Calu3 (cell line): ENCODE measurements at regions of chr13 and their contacts with region 1.

Region 1: GRCh38 chr13:110108347-110109174 is 198.4 kb downstream of the COL4A1 start:
- DNase-seq: peak; percentile 60
- H3K4me3 Mint-ChIP-seq: no peak overlapping the region
- H3K27ac Mint-ChIP-seq: no peak overlapping the region
- H3K4me1 Mint-ChIP-seq: peaks cover 11% of the 10 kb centered on the region
- H3K27me3 Mint-ChIP-seq: no peaks in the 10 kb centered on the region
- CTCF ChIP-seq: no peak

Region 2: DNA sequence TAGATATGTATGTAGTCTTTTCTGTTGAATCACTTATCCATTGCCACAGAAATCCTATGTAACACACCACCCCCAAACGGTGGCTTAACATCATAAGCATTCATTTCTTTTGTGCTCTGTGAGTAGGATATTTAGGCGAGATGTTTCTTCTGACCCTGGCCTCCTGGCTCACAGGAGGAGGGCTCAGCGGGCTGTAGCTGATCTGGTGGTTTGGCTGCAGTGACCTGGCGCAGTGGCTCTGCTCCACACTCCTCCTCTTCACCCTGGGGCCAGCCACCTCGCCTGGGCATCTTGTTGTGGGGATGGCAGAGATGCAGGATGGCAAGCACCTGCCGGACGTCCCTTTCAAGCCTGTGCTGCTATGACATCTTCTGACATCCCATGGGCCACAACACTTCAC is 175.1 kb before region 1 on chr13:
- CTCF ChIA-PET with region 1: no interaction called
- intact Hi-C with region 1: loop called (anchors 5 kb)
- DNase-seq: no peak
- H3K4me3 Mint-ChIP-seq: no peak overlapping the region
- H3K27ac Mint-ChIP-seq: no peak overlapping the region
- H3K4me1 Mint-ChIP-seq: no peaks in the 10 kb centered on the region
- H3K27me3 Mint-ChIP-seq: no peaks in the 10 kb centered on the region
- CTCF ChIP-seq: no peak

Region 3: DNA sequence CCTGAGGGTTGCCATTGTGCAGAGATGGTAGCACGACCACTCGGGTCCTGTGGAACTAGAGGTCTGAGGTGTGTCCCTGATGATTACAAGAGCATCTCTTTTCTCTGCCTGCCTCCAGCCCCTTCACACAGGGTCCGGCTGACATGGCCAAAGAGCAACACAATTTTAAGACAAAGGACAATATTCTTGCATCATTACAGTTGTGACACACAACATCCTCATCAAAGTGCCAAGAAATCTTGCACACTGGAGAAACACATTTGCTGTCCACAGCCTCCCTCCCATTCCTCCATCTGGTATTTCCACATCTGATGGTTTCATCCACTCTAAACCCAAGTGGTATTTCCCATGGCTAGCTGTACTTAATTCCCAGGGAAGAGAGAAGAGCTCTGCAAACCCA is 185.6 kb after region 1 on chr13:
- CTCF ChIA-PET with region 1: no interaction called
- intact Hi-C with region 1: no loop called
- DNase-seq: no peak
- H3K4me3 Mint-ChIP-seq: no peak overlapping the region
- H3K27ac Mint-ChIP-seq: no peak overlapping the region
- H3K4me1 Mint-ChIP-seq: no peaks in the 10 kb centered on the region
- H3K27me3 Mint-ChIP-seq: no peaks in the 10 kb centered on the region
- CTCF ChIP-seq: no peak

Region 4: DNA sequence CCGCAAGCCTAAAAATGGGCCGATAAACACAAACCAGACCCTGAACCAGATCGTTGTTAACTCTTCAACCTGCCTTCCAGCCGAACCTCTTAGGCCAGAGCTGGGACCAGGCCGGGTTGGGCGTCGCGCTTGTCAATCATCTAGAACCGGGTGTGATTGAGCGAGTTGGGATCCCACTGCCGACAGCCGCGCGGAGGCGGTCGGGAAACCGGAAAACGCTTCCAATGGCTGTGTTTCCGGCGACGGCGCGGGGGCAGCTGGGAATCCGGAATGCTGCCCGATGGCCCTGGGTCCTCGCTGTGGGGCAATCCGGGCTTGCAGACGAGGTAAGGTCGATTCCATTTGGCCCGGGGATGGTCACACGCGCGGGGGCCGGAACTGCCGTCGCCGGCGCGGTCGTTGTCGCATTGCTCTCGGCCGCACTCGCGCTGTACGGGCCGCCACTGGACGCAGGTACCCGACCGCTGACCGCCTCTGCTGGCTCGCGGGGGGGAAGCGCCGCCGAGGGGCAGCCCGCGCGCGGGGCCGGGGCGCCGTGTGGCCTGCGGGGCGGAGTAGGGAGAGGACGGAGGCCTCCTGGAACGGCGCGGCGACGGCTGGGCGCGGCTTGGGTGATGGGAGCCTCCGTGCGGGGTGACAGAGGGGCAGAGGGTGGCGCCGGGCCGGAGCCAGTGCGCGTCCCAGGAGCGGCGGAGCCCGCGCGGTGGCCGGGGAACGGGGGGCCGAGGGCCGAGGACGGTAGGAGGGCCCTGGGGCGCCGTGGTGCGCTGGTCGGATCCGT is 507.0 kb after region 1 on chr13 and contains the start of gene NAXD:
- CTCF ChIA-PET with region 1: no interaction called
- intact Hi-C with region 1: no loop called
- DNase-seq: peak; percentile 74
- H3K4me3 Mint-ChIP-seq: peak within 1 kb of the TSS; percentile 69
- H3K27ac Mint-ChIP-seq: no peak within 1 kb of the TSS
- H3K4me1 Mint-ChIP-seq: peaks cover 12% of the 10 kb centered on the region
- H3K27me3 Mint-ChIP-seq: no peaks in the 10 kb centered on the region
- CTCF ChIP-seq: no peak
- total RNA-seq, gene NAXD: 11.5 and 14.0 TPM in 2 replicates